Pancreas (tissue), 10 donors: ENCODE measurements at regions of chr10 and their contacts with region 1.

Region 1: GRCh38 chr10:17607603-17608332 is 9.4 kb downstream of the HACD1 start:
- DNase-seq: no peak
- ATAC-seq: peak; percentile 69 to 97 (median 94)
- H3K4me3 ChIP-seq: no peak overlapping the region
- H3K27ac ChIP-seq: no peak overlapping the region
- H3K4me1 ChIP-seq: no peaks in the 10 kb centered on the region
- H3K27me3 ChIP-seq: no peaks in the 10 kb centered on the region
- CTCF ChIP-seq: peak; percentile 56 to 77 (median 65)

Region 2: DNA sequence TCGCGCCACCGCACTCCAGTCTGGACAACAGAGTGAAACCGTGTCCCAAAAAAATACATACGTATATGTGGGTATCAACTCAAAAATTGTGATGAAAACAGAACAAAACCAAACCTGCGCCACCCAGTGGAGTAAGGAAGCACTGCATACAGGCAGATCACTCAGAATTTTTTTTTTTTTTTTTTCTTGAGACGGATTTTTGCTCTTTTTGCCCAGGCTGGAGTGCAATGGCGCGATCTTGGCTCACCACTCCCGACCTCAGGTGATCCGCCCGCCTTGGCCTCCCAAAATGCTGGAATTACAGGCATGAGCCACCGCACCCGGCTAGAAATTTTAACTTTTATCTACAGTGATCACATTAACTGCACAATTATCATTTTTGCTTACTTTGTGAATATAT is 135.2 kb after region 1 on chr10:
- intact Hi-C with region 1: loop called in 2 of 3 experiments (anchors 5 to 10 kb)
- DNase-seq: peak in 5 of 6 donors; percentile 20 to 85 (median 63)
- ATAC-seq: peak in 3 of 4 donors; percentile 58 to 73 (median 59)
- H3K4me3 ChIP-seq: peak overlapping the region in 1 of 4 donors; percentile 6
- H3K27ac ChIP-seq: no peak overlapping the region
- H3K4me1 ChIP-seq: peaks cover 0 to 22% (median 0%) of the 10 kb centered on the region in 3 donors
- H3K27me3 ChIP-seq: no peaks in the 10 kb centered on the region
- CTCF ChIP-seq: peak; percentile 76 to 87 (median 82)

Region 3: DNA sequence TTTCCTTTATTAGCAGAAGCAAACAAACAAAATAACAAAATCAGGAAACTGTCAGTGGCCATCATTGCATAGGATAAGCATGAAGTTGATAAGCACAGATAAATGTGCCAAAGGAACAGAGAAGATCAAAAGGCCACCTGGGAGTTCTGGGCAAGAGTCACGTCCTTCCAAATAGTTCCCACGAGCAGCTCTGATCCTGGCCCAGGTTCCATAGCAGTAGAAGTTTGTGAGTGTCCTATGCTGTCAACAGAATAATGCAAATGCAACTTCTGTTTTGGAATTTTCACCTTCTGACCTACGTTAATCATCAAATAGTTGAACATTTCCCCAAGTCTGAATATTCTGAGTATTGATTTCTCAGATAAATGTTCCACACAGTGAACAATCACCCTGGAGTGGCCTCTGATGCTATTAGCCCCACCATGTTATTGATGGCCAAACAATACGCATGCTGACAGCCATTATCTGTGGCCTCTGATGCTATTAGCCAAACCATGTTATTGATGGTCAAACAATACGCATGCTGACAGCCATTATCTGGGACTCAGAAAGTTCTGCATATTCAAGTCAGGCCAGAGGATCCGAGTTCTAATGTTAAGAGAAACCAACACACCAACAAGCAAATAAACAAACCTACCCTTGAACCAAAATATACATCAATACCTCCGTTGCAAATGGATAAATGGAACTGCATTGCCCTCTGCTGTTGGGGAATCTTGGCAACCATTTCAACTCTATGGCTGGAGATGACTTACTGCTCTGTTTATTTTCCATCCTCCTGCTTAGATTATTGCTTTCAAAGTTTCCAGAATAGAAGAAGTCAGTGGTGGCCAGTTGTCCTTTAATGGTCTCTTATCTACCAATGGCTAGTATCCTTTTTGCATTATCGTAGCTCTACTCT is 264.7 kb after region 1 on chr10:
- intact Hi-C with region 1: loop called in 1 of 3 experiments (anchors 5 kb)
- DNase-seq: peak in 1 of 6 donors; percentile 39
- ATAC-seq: peak; percentile 50 to 90 (median 84)
- H3K4me3 ChIP-seq: no peak overlapping the region
- H3K27ac ChIP-seq: no peak overlapping the region
- H3K4me1 ChIP-seq: peaks cover 0 to 6% (median 0%) of the 10 kb centered on the region in 3 donors
- H3K27me3 ChIP-seq: no peaks in the 10 kb centered on the region
- CTCF ChIP-seq: peak in 2 of 4 donors; percentile 18 to 37

Region 4: GRCh38 chr10:17923728-17924127 is 316.0 kb after region 1 on chr10:
- intact Hi-C with region 1: no loop called
- DNase-seq: peak in 3 of 6 donors; percentile 30 to 39 (median 32)
- ATAC-seq: peak in 3 of 4 donors; percentile 46 to 89 (median 67)
- H3K4me3 ChIP-seq: no peak overlapping the region
- H3K27ac ChIP-seq: peak overlapping the region in 1 of 4 donors; percentile 20
- H3K4me1 ChIP-seq: no peaks in the 10 kb centered on the region
- H3K27me3 ChIP-seq: no peaks in the 10 kb centered on the region
- CTCF ChIP-seq: no peak